ENCODE measurements at regions of chr14 and their contacts with region 1.

Region 1: DNA sequence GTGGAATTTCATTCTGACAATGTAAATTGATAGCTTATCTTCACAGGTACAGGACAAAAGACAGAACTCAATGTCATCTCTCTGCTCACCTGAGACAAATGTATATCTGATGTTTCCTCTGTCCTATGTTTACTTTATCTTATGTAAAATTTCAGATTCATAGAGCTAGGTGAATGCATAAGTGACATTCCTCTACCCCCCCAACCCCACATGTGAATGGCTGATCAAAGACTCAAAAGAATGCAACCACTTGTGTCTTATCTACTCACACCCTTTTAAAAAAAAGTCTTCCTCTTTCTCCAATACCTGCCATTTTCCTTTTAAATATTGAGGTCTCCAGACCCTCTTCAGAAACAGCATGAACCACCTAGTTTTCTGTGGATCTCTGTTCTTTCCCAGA is 736.6 kb upstream of the SEL1L start:
- DNase-seq: no peak
- H3K4me3 ChIP-seq: no peak overlapping the region
- H3K27ac ChIP-seq: no peak overlapping the region
- H3K4me1 ChIP-seq: no peaks in the 10 kb centered on the region
- H3K27me3 ChIP-seq: no peaks in the 10 kb centered on the region
- CTCF ChIP-seq: no peak
- POLR2A ChIP-seq: no peak

Region 2: GRCh38 chr14:82447586-82447985 is 177.3 kb after region 1 on chr14:
- intact Hi-C with region 1: no loop called
- DNase-seq: no peak
- H3K4me3 ChIP-seq: no peak overlapping the region
- H3K27ac ChIP-seq: no peak overlapping the region
- H3K4me1 ChIP-seq: no peaks in the 10 kb centered on the region
- H3K27me3 ChIP-seq: no peaks in the 10 kb centered on the region
- CTCF ChIP-seq: no peak
- POLR2A ChIP-seq: no peak

Region 3: DNA sequence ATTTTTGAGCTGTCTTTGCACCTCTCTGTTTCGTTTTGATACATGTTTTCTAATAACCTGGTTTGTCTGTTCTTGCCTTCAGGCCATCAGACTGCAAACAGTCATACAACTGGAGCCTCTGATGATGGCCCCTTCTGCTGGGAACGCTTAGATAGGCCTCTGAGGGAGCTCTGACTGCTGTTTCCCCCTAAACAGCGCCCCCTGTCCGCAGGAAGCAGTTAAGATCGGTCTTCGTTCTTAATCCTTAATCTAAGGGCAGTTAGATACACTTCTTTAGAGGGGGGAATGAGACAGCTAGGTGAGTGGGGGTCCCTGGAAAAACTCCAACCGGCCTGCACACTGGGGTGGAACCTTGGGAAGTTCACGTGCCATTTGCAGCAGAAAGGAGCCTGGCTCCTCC is 602.2 kb after region 1 on chr14:
- intact Hi-C with region 1: loop called (anchors 5 kb)
- DNase-seq: no peak
- H3K4me3 ChIP-seq: no peak overlapping the region
- H3K27ac ChIP-seq: no peak overlapping the region
- H3K4me1 ChIP-seq: no peaks in the 10 kb centered on the region
- H3K27me3 ChIP-seq: no peaks in the 10 kb centered on the region
- CTCF ChIP-seq: no peak
- POLR2A ChIP-seq: no peak